Cardiac septum (tissue), 1 donor: ENCODE measurements at regions of chr4 and their contacts with region 1.

Region 1: DNA sequence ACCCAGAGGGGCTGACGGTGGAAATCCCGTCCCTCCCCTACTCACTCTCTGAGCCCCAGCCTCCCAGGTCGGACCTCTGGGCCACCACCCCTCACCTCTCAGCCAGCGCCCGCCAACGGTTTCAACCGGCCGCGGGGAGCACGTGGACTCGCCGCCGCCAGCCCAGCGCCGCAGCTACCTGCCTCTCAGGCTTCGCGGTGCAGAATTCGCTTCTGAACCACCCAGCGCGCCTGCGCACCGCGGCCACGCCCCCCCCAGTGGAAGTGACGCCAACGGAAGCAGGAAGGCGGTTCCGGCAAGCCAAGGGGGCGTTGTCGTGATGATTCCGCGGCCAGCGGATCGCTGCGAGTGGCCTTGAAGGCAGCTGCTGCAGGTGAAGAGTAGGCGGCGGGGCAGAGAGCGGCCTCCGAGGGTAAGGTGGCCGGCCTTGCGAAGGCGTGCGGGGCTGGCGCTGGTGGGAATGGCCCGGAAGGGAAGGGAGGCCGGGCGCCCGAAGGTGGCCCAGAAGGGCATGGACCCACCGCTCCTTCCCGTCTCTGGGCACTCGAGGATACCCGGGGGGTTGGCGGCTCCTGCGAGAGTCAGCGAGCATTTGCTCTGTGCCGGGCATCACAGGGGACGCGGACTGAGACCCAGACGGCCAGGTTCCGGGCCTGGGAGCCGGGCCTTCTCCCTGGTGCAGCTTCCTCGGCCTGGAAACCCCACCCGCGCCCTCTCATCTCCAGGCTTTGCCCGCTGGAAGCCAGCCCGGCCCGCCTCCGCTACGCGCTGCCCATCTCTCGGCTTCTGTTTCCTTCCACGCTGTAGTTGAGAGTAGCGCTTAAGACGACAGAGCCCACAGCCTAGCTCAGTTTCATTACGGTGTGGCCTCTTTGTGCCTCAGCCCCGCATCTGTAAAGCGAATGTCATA is at the starts of genes LYAR and ZBTB49:
- DNase-seq: peak; percentile 97
- total RNA-seq, gene LYAR: 21.2 TPM
- total RNA-seq, gene ZBTB49: 7.7 TPM

Region 2: GRCh38 chr4:4248029-4248884 is 41.9 kb before region 1 on chr4 and contains the start of gene TMEM128:
- intact Hi-C with region 1: loop called (anchors 2 kb)
- DNase-seq: peak; percentile 98
- total RNA-seq, gene TMEM128: 12.4 TPM

Region 3: DNA sequence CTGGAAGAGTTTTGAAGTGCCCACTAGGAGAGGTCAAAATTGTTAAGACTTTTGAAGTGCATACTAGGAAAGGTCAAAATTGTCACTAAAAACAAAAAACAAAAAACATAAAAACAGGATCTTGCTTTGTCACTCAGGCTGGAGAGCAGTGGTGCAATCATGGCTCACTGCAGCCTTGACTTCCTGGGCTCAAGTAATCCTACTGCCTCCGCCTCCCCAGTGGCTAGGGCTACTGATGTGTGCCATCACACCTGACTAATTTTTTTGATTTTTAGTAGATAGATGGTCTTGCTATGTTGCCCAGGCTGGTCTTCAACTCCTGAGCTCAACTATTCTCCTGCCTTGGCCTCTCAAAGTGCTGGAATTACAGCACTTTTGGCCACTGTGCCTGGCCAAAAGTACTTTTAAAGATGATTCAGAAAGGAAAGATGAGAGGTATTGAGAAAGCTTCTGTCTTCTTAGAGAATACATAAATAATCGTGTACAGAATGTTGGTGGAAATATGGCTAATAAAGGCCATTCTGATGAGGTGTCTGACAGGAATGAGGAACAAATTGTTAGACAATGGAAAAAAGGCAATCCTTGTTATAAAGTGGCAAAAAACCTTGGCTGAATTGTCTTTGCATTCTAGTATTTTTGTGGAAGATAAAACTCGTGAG is 294.9 kb after region 1 on chr4:
- intact Hi-C with region 1: no loop called
- DNase-seq: no peak